Panc1 (cell line): ENCODE measurements at regions of chr3 and their contacts with region 1.

Region 1: DNA sequence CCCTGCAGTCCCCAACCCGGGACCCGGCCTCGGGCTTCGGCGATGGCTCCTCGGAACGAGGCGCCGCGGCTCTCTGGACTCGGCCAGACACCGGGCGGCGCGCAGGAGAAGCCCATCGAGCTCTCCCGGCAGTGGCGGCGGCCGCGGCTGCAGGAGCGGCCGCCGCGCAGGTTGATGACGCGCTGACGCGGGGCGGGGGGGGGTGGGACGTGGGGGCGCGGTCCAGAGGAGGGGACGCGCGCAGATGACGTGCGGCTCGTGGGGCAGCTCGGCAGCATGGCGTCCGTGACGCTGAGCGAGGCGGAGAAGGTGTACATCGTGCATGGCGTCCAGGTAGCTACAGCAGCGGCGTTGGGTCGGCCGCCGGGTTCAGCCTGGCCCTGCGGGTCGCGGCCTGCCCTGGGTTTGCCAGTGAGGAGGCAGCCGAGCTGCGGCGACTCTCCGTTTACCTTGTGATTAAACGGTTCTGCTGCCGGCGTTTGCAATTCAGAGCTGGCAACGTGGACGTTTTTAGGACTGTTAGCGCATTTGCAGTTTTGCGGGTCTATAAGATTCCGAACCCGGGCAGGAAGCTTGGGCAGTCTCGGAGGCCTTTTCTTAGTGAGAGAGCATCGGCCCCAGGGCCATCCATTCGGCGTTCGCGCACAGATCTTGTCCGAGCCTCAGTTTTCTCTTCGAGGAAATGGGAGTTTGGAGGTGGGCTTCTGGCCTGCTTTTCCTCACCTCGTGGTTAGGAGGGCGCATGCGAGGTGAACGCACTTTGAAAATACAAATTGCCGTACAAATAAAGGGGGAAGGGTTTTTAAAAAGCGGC is at the starts of genes EXOSC7 and ZDHHC3:
- DNase-seq: no peak
- ATAC-seq: peak; percentile 90
- H3K4me3 ChIP-seq: peak within 1 kb of the TSS; percentile 81 to 93
- H3K27ac ChIP-seq: peak within 1 kb of the TSS; percentile 93
- H3K4me1 ChIP-seq: peaks cover 9% of the 10 kb centered on the region
- H3K27me3 ChIP-seq: no peaks in the 10 kb centered on the region
- CTCF ChIP-seq: no peak
- total RNA-seq, gene EXOSC7: 38.4 TPM
- total RNA-seq, gene ZDHHC3: 49.5 TPM

Region 2: DNA sequence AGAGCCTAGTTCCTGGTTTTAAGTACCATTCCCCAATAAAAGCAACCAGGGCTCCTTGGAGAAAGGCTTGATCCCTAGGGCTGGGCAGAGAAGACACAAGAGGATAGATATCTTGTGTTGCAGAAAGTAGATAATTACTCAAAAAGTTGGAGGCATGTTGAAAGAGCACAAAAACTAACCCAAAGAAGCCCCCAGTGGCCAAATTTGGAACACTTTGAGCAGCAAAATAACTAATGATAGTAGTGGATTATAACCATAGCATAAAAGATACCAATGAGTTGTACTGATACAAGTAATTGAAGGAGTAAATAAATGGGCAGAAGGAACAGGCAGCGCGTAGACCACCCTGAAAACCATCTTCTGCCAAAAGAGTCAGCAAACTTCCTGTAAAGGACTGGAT is 11.9 kb after region 1 on chr3:
- CTCF ChIA-PET with region 1: no interaction called
- POLR2A ChIA-PET with region 1: interaction called, 13 read pairs
- in situ Hi-C with region 1: no loop called
- intact Hi-C with region 1: no loop called
- DNase-seq: no peak
- ATAC-seq: no peak
- H3K4me3 ChIP-seq: no peak overlapping the region
- H3K27ac ChIP-seq: no peak overlapping the region
- H3K4me1 ChIP-seq: no peaks in the 10 kb centered on the region
- H3K27me3 ChIP-seq: no peaks in the 10 kb centered on the region
- CTCF ChIP-seq: peak; percentile 45

Region 3: DNA sequence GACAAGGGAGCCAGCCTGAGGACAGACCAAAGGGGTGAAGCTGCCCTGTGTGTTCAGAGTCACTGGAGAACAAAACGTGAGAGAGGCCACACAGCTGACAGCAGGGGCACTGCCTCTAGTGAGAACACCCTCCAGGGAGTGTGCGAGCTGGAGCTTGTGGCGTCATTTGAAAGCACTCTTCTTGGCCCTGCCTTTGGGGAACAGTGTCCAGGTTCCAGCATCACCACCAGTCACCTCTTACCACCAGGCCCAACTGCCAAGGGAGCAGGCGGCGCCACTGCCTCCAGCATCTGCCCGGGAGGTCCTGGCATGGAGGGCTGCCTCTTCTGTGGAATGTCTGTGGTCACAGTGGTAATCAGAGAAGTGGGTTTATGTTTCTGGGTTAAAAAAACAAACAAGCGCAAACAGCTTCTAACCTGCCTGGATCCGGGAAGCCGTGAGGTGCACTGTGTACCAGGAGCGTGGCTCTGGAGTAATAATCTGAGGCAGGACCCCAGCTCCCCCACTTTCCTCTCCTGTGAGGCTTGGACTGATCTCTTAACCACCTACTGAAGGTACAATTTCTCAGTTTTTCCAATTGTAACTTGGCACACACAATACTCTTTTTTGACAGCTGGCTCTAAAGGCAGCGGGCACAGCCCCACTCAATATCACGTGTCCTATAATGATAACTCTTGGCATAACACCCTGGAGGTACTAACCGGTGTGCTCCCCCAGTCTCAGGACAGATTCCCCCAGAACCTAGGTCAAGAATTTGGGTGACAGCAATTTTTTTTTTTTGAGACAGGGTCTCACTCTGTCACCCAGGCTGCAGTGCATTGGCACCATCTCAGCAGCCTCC is 202.2 kb after region 1 on chr3:
- CTCF ChIA-PET with region 1: interaction called, 10 read pairs
- POLR2A ChIA-PET with region 1: no interaction called
- in situ Hi-C with region 1: no loop called
- intact Hi-C with region 1: no loop called
- DNase-seq: no peak
- ATAC-seq: peak; percentile 85
- H3K4me3 ChIP-seq: no peak overlapping the region
- H3K27ac ChIP-seq: peak overlapping the region; percentile 48
- H3K4me1 ChIP-seq: peaks cover 10% of the 10 kb centered on the region
- H3K27me3 ChIP-seq: no peaks in the 10 kb centered on the region
- CTCF ChIP-seq: no peak